ENCODE measurements at regions of chr10 and their contacts with region 1.

Region 1: GRCh38 chr10:114103284-114103683 is 59.6 kb downstream of the ADRB1 start:
- DNase-seq: no peak
- ATAC-seq: peak; percentile 57 to 66

Region 2: GRCh38 chr10:113802997-113803396 is 300.3 kb before region 1 on chr10:
- intact Hi-C with region 1: loop called (anchors 2 to 5 kb)
- DNase-seq: no peak
- ATAC-seq: no peak

Region 3: DNA sequence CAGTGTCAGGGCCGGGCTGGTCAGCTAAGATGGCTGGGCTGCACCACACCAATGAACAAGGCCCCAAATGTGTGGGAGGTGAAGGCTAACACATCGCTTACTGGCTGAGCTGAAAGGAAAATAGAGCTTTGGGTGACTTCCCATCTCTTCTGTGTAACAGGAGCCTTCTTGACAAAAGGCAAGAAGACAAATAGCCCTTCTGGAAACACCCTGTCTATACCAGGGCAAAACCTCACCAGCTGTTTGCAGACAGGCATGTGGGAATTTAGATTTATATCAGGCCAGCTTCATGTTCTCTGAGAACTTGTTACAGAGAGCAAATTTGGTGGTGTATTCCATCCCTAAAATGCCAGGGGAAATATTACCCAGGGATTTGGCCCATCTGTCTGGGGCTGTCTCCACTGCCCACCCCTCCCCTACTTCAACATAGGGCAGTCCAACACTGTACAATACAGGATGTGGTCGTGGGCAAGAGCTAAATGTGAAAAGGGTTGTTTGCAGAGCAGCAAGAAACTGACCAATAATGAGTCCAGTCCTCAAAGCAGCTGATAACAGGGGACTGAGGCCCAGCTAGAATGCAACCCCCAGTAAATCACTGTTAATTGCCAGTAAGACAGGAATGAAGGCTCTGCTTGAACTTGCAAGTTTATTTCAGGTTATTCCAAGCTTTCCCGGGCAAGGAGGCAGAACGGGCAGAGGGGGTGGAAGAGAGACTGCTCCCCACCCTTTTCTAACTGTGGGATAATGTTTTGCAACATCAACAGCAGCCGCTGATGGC is 263.9 kb after region 1 on chr10:
- intact Hi-C with region 1: no loop called
- DNase-seq: no peak
- ATAC-seq: peak; percentile 66 to 86